Activated CD8-positive, alpha-beta T cell treated with anti-CD3 and anti-CD28 coated beads for 36 hours (primary cell): ENCODE measurements at regions of chr1 and their contacts with region 1.

Region 1: DNA sequence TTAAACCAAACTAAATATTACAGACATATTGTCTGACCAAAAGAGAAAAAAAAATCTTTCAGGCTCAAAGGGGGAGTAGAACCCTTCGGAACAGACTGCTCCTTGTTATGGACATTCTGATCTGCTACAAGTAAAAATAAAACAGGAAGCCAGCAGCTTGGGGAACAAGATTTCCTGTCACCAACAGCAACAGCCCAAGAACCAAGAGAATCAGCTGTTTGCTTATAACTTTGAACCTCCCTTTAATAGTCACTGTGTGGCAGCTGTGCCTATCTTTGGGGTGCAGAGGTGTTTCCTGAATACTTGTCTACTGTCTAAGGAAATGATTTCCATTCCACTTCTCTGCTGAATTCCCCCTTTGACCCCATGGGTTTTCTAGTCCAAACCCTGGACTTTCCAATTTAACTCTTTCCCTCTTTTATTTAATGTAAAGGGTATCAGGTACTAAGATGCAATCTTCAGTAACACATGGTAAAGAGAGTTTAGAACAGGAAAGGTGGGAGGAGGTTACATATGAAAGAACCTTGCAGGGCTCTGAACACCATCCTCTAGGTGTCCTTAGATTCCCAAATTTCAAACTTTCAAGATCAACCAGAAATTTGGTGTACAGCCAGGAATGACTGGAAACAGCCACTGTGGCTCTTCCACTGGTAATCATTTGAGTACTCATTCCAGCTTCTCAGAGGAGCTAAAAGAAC is 38.6 kb downstream of the GPR3 start:
- DNase-seq: no peak
- ATAC-seq: peak; percentile 41
- H3K4me3 Mint-ChIP-seq: no peak overlapping the region
- H3K27ac Mint-ChIP-seq: peak overlapping the region; percentile 79
- H3K4me1 Mint-ChIP-seq: peaks cover 80% of the 10 kb centered on the region
- H3K27me3 Mint-ChIP-seq: no peaks in the 10 kb centered on the region
- CTCF ChIP-seq: no peak

Region 2: GRCh38 chr1:27445177-27445936 is 14.3 kb after region 1 on chr1:
- CTCF ChIA-PET with region 1: interaction called, 14 read pairs
- POLR2A ChIA-PET with region 1: interaction called, 4 read pairs
- intact Hi-C with region 1: no loop called
- DNase-seq: no peak
- ATAC-seq: peak; percentile 84
- H3K4me3 Mint-ChIP-seq: peak overlapping the region; percentile 66
- H3K27ac Mint-ChIP-seq: peak overlapping the region; percentile 97
- H3K4me1 Mint-ChIP-seq: peaks cover 55% of the 10 kb centered on the region
- H3K27me3 Mint-ChIP-seq: no peaks in the 10 kb centered on the region
- CTCF ChIP-seq: no peak